Uterus (tissue), 4 donors: ENCODE measurements at regions of chr2 and their contacts with region 1.

Region 1: GRCh38 chr2:170928824-170929685 is at the start of gene GORASP2:
- DNase-seq: peak; percentile 98 to 99
- H3K4me3 ChIP-seq: peak within 1 kb of the TSS; percentile 73 to 90
- H3K27ac ChIP-seq: peak within 1 kb of the TSS; percentile 88 to 89
- H3K4me1 ChIP-seq: no peaks in the 10 kb centered on the region
- H3K27me3 ChIP-seq: no peaks in the 10 kb centered on the region
- CTCF ChIP-seq: peak; percentile 92 to 99 (median 96)
- POLR2A ChIP-seq: peak; percentile 70 to 93
- total RNA-seq, gene GORASP2: 23.1 to 116 (median 65.4) TPM

Region 2: GRCh38 chr2:169584005-169584877 is 1344.8 kb before region 1 on chr2 and contains the start of gene PPIG:
- intact Hi-C with region 1: no loop called
- DNase-seq: peak; percentile 87 to 90
- H3K4me3 ChIP-seq: peak within 1 kb of the TSS; percentile 69 to 91
- H3K27ac ChIP-seq: peak within 1 kb of the TSS; percentile 92 to 95
- H3K4me1 ChIP-seq: peaks cover 0 to 3% of the 10 kb centered on the region in 2 donors
- H3K27me3 ChIP-seq: no peaks in the 10 kb centered on the region
- CTCF ChIP-seq: peak in 1 of 4 experiments; percentile 10
- POLR2A ChIP-seq: peak; percentile 28 to 69
- total RNA-seq, gene PPIG: 24.3 to 83.4 (median 59.0) TPM

Region 3: DNA sequence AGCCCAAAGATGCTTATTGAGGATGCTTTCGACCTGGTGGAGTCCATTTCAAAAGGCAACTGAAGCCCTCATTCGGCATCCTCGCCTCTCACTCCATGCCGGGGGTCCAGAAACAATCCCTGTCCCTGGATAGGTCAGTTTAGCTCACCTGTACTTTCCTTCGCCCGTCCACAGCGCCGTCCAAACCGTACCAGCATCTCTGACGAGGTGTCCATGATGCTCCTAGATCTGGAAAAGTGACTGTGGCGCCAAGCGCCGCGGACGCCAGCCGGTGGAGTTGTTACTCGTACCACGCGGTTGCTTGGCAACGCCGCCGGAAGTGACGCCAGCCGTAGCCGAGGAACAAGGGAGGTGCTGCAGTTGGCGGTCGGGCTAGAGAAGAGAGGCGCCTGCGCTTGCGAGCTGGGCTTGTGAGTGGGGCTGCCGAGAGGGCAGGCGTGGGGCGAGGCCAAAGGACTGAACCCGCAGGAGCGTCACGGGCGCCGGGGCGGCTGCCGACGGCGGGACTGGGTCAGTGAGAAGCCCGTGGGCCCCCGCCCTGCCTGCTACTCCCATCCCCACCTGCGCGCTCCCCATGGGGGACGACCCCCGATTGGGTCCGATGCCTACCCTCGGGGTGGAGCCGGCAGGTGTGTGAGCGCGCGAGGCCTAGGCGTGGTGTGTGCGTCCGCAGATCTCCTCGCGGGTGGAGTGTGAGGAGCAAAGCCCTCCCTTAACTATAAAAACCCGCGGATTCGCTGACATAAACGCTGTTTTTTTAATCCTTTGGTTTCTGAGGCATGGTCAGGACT is 1234.7 kb before region 1 on chr2 and contains the starts of genes CFAP210 and PHOSPHO2:
- intact Hi-C with region 1: loop called (anchors 10 kb)
- DNase-seq: peak; percentile 99
- H3K4me3 ChIP-seq: peak within 1 kb of the TSS; percentile 98
- H3K27ac ChIP-seq: peak within 1 kb of the TSS; percentile 79 to 90
- H3K4me1 ChIP-seq: no peaks in the 10 kb centered on the region
- H3K27me3 ChIP-seq: no peaks in the 10 kb centered on the region
- CTCF ChIP-seq: peak in 1 of 4 experiments; percentile 16
- POLR2A ChIP-seq: peak; percentile 79 to 87
- total RNA-seq, gene CFAP210: 0.64 to 3.3 TPM in 2 of 4 donors, not detected in the others
- total RNA-seq, gene PHOSPHO2: 6.1 to 10.5 (median 7.5) TPM